CD4-positive, alpha-beta T cell (primary cell): ENCODE measurements at regions of chr12 and their contacts with region 1.

Region 1: DNA sequence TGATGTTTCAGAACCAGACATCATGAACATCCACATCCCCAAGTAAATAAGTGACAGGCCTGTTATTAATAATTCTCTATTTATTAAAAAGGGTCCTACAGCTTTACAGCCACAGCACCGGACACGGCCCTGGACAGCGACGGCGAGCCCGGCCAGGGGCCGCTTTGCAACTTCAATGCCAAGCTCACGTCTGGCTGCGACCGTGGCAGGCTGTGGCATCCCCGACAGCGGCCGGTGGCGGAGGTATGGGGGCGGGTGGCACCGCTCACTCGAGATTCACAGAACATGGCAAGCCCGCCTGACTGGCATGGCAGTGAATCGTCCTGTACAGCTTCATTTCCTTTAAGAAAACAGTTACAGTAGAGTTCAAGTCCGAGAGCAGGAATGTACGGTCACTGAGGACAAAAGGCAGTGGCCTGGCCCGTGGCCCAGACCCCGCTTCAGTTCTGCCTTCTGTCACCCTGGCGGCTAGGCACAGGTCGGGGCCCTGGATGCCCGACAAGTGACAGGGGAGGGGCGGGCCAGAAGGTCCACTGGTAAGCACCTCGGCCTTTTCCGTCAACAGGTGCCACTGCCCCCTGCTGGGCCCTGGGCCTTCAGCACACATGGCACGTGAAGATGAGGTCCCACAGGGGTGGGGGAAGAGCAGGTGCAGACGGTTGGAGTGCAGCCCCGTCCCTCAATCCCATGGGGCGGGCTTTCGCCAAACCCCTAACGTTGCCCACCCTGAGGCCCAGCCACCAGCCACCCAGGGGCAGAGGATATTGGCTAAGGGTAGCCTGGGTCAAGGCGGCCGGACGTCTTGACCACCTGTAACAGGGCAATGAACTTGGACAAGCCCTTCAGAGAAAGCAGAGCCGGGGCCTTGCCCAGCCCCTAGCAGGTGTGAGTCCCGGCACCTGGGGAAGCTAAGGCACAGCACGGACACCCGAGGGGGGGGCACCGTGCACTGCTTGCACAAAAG is 30.3 kb downstream of the HIP1R start:
- DNase-seq: peak in 5 of 14 experiments; percentile 30 to 60 (median 43)
- ATAC-seq: peak; percentile 52
- H3K4me3 ChIP-seq: no peak overlapping the region
- H3K4me3 Mint-ChIP-seq: no peak overlapping the region
- H3K27ac ChIP-seq: no peak overlapping the region
- H3K27ac Mint-ChIP-seq: peak overlapping the region; percentile 73
- H3K4me1 ChIP-seq: peaks cover 7% of the 10 kb centered on the region
- H3K4me1 Mint-ChIP-seq: peaks cover 9% of the 10 kb centered on the region
- H3K27me3 ChIP-seq: no peaks in the 10 kb centered on the region
- H3K27me3 Mint-ChIP-seq: no peaks in the 10 kb centered on the region
- CTCF ChIP-seq: no peak

Region 2: GRCh38 chr12:122895705-122896636 is 30.4 kb after region 1 on chr12 and contains the start of gene VPS37B:
- CTCF ChIA-PET with region 1: interaction called, 6 read pairs
- POLR2A ChIA-PET with region 1: interaction called, 81 read pairs
- intact Hi-C with region 1: loop called in 1 of 2 experiments (anchors 5 kb)
- DNase-seq: peak; percentile 68 to 95 (median 84)
- ATAC-seq: peak; percentile 66
- H3K4me3 ChIP-seq: peak within 1 kb of the TSS; percentile 64
- H3K4me3 Mint-ChIP-seq: peak within 1 kb of the TSS; percentile 87
- H3K27ac ChIP-seq: peak within 1 kb of the TSS; percentile 83 to 85
- H3K27ac Mint-ChIP-seq: peak within 1 kb of the TSS; percentile 98
- H3K4me1 ChIP-seq: peaks cover 68% of the 10 kb centered on the region
- H3K4me1 Mint-ChIP-seq: peaks cover 93% of the 10 kb centered on the region
- H3K27me3 ChIP-seq: no peaks in the 10 kb centered on the region
- H3K27me3 Mint-ChIP-seq: no peaks in the 10 kb centered on the region
- CTCF ChIP-seq: no peak
- total RNA-seq, gene VPS37B: 97.7 to 104 TPM

Region 3: GRCh38 chr12:122902854-122903692 is 37.5 kb after region 1 on chr12:
- CTCF ChIA-PET with region 1: interaction called, 6 read pairs
- POLR2A ChIA-PET with region 1: interaction called, 81 read pairs
- intact Hi-C with region 1: loop called in 1 of 2 experiments (anchors 5 kb)
- DNase-seq: no peak
- ATAC-seq: no peak
- H3K4me3 ChIP-seq: no peak overlapping the region
- H3K4me3 Mint-ChIP-seq: peak overlapping the region; percentile 66
- H3K27ac ChIP-seq: no peak overlapping the region
- H3K27ac Mint-ChIP-seq: no peak overlapping the region
- H3K4me1 ChIP-seq: peaks cover 34% of the 10 kb centered on the region
- H3K4me1 Mint-ChIP-seq: peaks cover 42% of the 10 kb centered on the region
- H3K27me3 ChIP-seq: no peaks in the 10 kb centered on the region
- H3K27me3 Mint-ChIP-seq: no peaks in the 10 kb centered on the region
- CTCF ChIP-seq: no peak